ENCODE measurements at regions of chr12 and their contacts with region 1.

Region 1: DNA sequence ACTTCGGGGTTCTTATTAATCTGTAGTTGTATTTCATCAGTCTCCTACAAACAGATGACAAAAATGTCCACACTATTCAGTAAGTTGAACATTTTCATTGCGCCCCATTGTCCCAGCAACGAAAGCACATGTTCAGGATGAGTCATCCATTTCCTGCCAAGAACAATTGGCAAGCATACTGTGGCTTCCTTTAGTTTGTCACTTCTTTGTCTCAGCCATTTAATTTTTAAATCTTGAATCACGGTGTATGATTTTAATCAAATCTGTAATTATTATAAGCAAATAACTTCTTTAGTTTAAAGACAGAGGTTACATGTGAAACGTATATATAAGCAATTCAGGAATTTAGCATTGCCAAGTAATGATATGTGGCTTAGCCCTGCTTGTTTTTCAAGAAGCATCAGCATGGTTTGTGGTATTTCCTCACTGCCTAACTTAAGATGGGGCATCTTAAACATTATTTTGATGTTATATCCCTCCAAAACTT is 211.3 kb upstream of the KRR1 start:
- DNase-seq: peak; percentile 47
- ATAC-seq: peak; percentile 76 to 78

Region 2: DNA sequence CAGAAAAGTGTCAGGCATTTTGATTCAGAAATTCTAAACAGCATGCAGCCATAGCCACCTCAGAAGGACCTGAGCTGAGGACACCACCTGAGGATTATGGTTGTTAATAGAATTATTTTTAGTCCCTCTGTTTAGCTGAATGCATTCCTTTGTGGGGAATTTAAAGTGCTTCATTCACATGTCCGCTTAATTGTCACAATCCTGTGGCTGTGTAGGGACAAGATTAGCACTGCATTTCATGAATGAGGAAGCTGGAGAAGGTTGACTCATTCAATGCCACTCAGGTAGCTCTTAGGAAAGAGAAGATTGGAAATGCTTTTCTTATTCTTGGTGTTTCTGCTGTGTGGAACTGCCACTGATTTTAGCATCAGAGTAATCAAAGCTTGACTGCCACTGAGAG is 169.4 kb before region 1 on chr12:
- intact Hi-C with region 1: loop called in 1 of 2 experiments (anchors 10 kb)
- DNase-seq: no peak
- ATAC-seq: peak; percentile 50 to 61

Region 3: DNA sequence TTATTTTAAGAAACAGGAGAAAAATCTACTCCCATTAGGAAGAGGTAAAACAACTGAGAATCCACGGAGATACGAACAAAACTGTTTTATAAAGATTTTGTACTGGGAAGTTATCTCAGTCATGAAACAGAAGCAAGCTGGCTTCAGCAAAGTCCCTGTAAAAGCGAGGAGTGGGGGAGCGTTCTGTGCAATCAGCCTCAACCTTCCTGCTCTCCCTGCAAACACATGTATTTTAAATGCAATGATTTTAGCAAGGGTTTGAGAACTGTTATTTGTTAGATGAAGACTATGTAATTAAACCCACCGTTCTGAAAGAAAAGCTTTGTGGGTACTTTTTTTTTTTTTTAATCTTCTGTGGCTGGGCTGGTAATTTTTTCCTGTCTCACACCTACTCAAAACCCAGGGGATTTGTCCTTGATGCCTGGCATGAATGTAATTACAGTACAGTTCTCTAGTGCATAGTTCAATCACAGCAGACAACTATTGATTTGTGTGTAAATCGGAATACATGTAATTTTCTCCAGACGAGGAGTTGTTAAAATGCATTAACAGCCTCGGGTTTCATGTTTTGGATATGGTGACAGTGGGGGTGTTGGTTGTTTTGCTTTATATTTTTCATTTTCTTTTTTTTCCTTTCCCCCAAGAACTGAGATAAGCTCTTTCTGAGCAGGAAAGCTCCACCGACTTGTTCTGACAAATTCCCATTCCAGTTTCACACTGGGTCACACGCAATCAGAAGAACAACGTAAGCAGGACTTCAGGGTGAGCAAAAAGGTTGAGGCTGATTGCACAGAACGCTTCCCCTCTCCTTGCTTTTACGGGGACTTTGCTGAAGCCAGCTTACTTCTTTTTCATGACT is 155.2 kb after region 1 on chr12:
- intact Hi-C with region 1: no loop called
- DNase-seq: no peak
- ATAC-seq: no peak

Region 4: GRCh38 chr12:75908961-75909605 is 186.3 kb after region 1 on chr12:
- intact Hi-C with region 1: loop called in 1 of 2 experiments (anchors 10 kb)
- DNase-seq: peak; percentile 80
- ATAC-seq: peak; percentile 77 to 85